Transverse colon (tissue), 4 donors: ENCODE measurements at regions of chr17 and their contacts with region 1.

Region 1: GRCh38 chr17:42917236-42917603 is 16.6 kb downstream of the G6PC1 start:
- DNase-seq: no peak
- H3K4me3 ChIP-seq: no peak overlapping the region
- H3K27ac ChIP-seq: no peak overlapping the region
- H3K4me1 ChIP-seq: peaks cover 0 to 11% (median 3%) of the 10 kb centered on the region in 4 donors
- H3K27me3 ChIP-seq: peaks cover 80% of the 10 kb centered on the region
- CTCF ChIP-seq: no peak
- EP300 ChIP-seq: no peak
- POLR2A ChIP-seq: no peak

Region 2: DNA sequence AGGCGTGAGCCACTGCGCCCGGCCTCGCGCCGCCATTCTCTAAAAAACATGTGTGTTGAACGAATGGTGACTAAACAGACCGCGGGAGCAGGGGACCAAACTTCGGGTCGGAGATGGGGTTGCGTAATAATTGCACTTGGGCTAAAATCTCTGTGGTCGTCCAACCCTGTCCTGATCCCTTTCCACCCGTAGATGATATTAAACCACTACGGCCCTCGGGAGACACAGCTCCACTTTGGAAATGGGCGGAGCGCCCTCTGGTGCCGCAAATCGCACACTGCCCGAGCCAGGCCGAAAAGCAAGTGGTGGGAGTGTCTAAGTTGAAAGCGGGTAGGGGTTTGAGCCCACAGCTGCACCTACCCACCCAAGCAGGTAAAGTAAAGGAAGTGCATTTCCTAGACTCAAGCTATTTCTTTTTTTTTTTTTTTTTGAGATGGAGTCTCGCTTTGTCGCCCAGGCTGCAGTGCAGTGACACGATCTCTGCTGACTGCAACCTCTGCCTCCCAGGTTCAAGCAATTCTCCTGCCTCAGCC is 511.2 kb before region 1 on chr17:
- in situ Hi-C with region 1: no loop called
- intact Hi-C with region 1: no loop called
- DNase-seq: peak; percentile 87
- H3K4me3 ChIP-seq: no peak overlapping the region
- H3K27ac ChIP-seq: peak overlapping the region; percentile 72 to 90 (median 79)
- H3K4me1 ChIP-seq: peaks cover 33 to 67% (median 60%) of the 10 kb centered on the region in 4 donors
- H3K27me3 ChIP-seq: no peaks in the 10 kb centered on the region
- CTCF ChIP-seq: peak; percentile 87 to 97 (median 88)
- EP300 ChIP-seq: no peak
- POLR2A ChIP-seq: no peak

Region 3: DNA sequence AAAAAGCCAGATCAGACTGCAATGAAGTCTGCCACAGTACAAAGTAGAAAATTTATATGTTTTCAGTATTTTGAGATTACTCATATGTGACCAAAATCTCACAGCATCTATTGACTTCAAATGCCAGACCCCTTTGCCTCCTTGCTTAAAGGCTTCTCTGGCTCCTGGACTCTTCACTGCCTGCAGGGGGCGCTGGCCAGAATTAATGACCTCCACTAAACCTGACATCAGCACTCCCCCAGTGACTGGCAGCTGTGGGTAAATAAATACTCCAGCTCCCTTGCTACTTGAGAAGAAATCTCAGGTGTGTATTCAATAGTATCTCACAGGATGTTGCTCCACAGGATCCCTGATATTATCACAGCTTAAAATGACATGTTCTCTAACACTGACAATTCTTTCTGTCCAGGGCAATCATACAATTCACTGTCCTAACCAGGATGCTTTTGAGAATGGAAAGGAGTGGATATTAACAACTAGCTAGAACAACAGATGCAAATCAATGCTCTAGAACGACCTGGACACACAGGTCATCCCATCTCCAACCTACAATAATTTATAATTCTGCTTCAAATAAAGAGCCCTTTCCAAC is 97.2 kb before region 1 on chr17:
- in situ Hi-C with region 1: no loop called
- intact Hi-C with region 1: no loop called
- DNase-seq: peak; percentile 66
- H3K4me3 ChIP-seq: no peak overlapping the region
- H3K27ac ChIP-seq: no peak overlapping the region
- H3K4me1 ChIP-seq: peaks cover 9 to 21% (median 12%) of the 10 kb centered on the region in 4 donors
- H3K27me3 ChIP-seq: no peaks in the 10 kb centered on the region
- CTCF ChIP-seq: peak; percentile 55 to 67 (median 64)
- EP300 ChIP-seq: no peak
- POLR2A ChIP-seq: no peak

Region 4: DNA sequence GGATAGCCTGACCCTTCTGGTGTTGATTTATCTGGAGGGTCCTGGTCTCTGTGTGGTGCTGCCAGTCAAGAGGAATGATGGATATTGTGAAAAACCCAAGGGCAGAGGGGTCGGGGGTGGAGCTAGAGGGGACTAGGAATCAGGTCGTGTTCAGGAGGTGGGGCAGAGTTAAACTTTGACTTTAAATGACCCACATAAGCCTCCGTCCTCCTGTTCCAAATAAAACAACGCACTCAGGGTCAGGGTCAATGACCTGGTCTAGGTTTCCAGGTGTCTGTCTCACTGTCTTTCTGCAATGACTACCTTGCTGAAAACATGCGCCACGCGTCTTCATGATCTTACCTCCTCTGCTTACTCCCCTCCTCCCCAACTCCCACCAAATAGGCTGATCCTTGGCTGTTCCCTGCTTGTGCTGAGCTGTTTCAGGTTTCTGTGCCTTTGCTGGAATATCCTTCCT is 51.6 kb before region 1 on chr17:
- in situ Hi-C with region 1: no loop called
- intact Hi-C with region 1: no loop called
- DNase-seq: no peak
- H3K4me3 ChIP-seq: no peak overlapping the region
- H3K27ac ChIP-seq: no peak overlapping the region
- H3K4me1 ChIP-seq: peaks cover 0 to 10% (median 2%) of the 10 kb centered on the region in 4 donors
- H3K27me3 ChIP-seq: no peaks in the 10 kb centered on the region
- CTCF ChIP-seq: no peak
- EP300 ChIP-seq: no peak
- POLR2A ChIP-seq: no peak

Region 5: DNA sequence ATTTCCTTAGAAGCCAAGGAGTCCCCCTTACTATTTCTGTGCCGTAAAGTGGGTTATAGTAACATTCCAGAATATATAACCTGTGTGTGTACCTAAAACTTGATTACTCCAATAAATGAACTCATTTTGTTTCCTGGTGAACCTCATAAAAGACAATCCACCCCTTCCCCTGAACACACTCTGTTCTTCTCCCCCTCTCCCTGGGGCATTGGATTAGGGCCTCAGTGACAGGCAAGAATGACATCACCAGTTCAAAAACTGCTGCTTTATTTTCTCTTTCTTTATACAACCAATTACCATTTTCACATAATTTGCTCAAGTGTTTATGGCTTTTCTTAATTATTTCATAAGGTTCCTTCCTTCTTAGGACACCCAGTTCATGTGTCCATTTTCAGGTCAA is 29.6 kb after region 1 on chr17:
- in situ Hi-C with region 1: no loop called
- intact Hi-C with region 1: loop called (anchors 1 kb)
- DNase-seq: no peak
- H3K4me3 ChIP-seq: no peak overlapping the region
- H3K27ac ChIP-seq: no peak overlapping the region
- H3K4me1 ChIP-seq: peaks cover 0 to 3% (median 0%) of the 10 kb centered on the region in 4 donors
- H3K27me3 ChIP-seq: no peaks in the 10 kb centered on the region
- CTCF ChIP-seq: no peak
- EP300 ChIP-seq: no peak
- POLR2A ChIP-seq: no peak